ENCODE measurements at regions of chr7 and their contacts with region 1.

Region 1: GRCh38 chr7:127782654-127783559 is 130.9 kb downstream of the SND1 start:
- H3K4me3 ChIP-seq: no peak overlapping the region
- H3K27ac ChIP-seq: no peak overlapping the region
- H3K4me1 ChIP-seq: no peaks in the 10 kb centered on the region
- CTCF ChIP-seq: no peak

Region 2: GRCh38 chr7:127346575-127347256 is 436.2 kb before region 1 on chr7:
- CTCF ChIA-PET with region 1: no interaction called
- POLR2A ChIA-PET with region 1: no interaction called
- H3K4me3 ChIP-seq: no peak overlapping the region
- H3K27ac ChIP-seq: no peak overlapping the region
- H3K4me1 ChIP-seq: no peaks in the 10 kb centered on the region
- CTCF ChIP-seq: no peak

Region 3: GRCh38 chr7:127585044-127585953 is 197.6 kb before region 1 on chr7 and contains the start of gene GCC1:
- CTCF ChIA-PET with region 1: no interaction called
- POLR2A ChIA-PET with region 1: no interaction called
- H3K4me3 ChIP-seq: peak within 1 kb of the TSS; percentile 91
- H3K27ac ChIP-seq: no peak within 1 kb of the TSS
- H3K4me1 ChIP-seq: peaks cover 6% of the 10 kb centered on the region; the same call in 1 of the 2 replicates
- CTCF ChIP-seq: no peak

Region 4: DNA sequence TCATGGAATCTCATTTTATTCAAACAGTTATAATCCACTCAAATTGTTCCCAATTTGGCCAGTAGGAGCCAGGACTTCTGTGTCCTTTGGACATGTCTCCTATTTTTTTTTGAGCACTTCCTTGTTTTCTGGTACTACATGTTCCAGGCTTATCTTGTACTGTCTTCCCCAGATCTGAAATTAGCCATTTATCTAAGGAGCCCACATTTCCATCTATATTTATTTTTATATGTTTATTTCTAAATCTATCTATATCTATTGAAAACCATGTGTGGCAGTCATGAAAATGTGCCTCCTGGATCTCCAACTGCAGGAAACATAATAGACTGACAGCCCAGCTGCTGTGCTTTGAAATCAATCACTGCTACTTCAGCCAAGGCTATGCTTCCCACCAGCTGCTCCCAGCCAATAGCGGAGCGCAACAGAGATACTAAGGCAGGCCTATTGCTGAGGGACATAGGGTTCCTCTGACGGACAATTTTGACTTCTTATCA is 101.2 kb after region 1 on chr7:
- CTCF ChIA-PET with region 1: interaction called, 10 read pairs
- POLR2A ChIA-PET with region 1: no interaction called
- H3K4me3 ChIP-seq: no peak overlapping the region
- H3K27ac ChIP-seq: no peak overlapping the region
- H3K4me1 ChIP-seq: no peaks in the 10 kb centered on the region
- CTCF ChIP-seq: no peak

Measured in HEK293 (cell line).